Left cardiac atrium (tissue), 4 donors: ENCODE measurements at regions of chr19 and their contacts with region 1.

Region 1: GRCh38 chr19:56076498-56076897 is 44.6 kb downstream of the ZNF787 start:
- DNase-seq: no peak
- ATAC-seq: peak; percentile 32 to 53

Region 2: GRCh38 chr19:56170261-56170660 is 93.8 kb after region 1 on chr19:
- intact Hi-C with region 1: loop called (anchors 1 to 5 kb)
- DNase-seq: no peak
- ATAC-seq: peak in 1 of 2 donors; percentile 59

Region 3: DNA sequence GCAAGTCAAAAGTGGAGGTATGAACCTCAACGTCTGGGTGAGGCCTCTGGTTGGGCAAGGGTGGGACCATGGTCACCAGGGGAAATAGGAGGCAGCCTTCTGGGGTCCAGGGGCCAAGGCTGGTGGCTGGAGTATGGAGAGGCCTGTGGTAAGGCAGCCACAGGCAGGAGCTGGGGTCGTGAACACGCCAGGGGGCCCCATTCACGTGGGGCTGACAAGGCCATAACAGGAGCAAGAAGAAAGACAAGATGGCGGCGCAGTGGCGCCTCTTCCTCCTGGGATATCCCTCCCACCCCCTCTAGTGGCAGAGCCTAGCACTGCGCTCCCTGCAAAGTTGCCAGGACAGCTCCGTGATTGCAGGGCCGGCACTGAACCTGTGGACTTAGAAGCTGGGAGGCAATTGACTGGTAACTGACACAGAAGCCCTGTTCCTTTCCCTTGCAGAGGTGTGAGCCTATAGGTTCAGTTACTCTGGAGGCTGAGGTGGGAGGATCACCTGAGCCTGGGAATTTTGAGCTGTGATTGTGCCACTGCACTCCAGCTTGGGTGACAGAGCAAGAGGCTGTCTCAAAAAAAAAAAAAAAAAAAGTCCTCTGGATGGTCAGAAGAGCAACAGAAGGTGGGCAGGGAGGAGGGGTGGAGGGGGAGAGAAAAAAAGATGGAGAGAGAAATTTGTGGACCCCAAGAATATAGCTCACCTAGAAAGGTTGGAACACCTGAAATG is 176.4 kb after region 1 on chr19:
- intact Hi-C with region 1: loop called in 1 of 2 experiments (anchors 10 kb)
- DNase-seq: peak; percentile 68
- ATAC-seq: peak; percentile 79 to 94

Region 4: DNA sequence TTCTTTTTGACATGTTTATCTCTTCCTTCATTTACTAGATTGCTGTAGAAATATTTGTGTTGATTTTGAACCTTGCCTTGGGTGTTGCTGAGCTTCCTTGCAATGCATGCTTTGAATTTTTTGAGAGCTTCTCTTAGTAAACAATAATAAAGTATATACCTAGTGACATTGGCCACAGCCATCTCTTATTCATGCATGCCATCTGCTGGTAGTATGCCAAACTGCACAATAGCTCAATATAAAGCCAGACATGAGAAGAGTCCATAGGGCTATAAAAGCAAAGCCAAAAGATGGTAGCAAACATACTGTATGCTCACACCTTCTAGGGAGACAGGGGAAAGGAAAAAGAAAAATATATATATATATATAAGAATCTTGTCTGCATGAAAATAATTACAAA is 257.0 kb after region 1 on chr19:
- intact Hi-C with region 1: loop called in 1 of 2 experiments (anchors 5 kb)
- DNase-seq: no peak
- ATAC-seq: no peak

Region 5: GRCh38 chr19:56350416-56351045 is 274.0 kb after region 1 on chr19:
- intact Hi-C with region 1: loop called (anchors 5 kb)
- DNase-seq: peak; percentile 39
- ATAC-seq: peak in 1 of 2 donors; percentile 44